Mammary epithelial cell (primary cell): ENCODE measurements at regions of chr1 and their contacts with region 1.

Region 1: DNA sequence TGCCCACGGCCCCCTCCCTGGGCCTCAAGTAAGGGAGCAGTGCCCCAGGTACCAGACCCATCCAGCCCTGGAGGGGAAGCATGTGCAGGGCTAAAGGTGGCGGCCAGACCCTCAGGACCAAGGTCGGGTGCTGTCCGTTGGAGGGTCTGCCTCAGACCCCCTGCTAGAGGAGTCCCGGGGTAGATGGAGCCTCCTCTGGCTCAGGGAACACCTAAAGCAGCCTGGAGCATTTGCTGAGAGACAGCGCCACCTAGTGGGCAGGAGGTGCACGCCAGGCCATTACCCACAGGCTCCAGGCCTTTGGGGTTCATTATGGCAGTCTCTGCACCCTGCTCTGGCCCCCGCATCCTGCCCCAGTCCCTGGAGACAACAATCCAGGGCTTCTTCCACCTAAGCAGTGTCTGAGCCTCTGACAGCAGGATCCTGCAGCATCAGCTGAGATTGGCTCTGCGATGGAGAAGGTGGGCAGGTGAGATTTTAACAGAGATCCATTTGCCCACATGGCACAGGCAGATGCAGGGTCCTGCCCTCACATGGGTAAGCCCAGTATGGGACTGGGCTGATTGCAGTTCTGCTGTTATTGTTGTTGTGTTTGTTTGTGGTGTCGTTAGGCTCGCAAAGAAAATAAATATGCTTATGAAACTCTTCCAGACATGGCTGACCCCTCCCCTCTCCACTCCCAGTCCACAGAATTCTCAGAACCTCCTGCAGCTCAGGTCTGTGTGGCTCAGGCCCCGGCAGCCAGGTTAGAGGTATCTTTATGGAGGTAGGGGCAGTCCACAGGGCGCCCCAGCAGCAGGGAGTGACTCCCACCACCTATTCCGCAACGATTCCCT is 42.4 kb downstream of the CTNNBIP1 start:
- DNase-seq: peak; percentile 61
- H3K4me3 ChIP-seq: no peak overlapping the region
- H3K27ac ChIP-seq: no peak overlapping the region
- H3K4me1 ChIP-seq: peaks cover 14% of the 10 kb centered on the region
- H3K27me3 ChIP-seq: no peaks in the 10 kb centered on the region
- CTCF ChIP-seq: peak; percentile 95 to 98

Region 2: GRCh38 chr1:9724706-9725476 is 142.7 kb before region 1 on chr1:
- CTCF ChIA-PET with region 1: no interaction called
- dilution Hi-C with region 1: no loop called
- in situ Hi-C with region 1: no loop called
- intact Hi-C with region 1: loop called (anchors 1 kb)
- DNase-seq: peak; percentile 45
- H3K4me3 ChIP-seq: no peak overlapping the region
- H3K27ac ChIP-seq: no peak overlapping the region
- H3K4me1 ChIP-seq: peaks cover 27% of the 10 kb centered on the region
- H3K27me3 ChIP-seq: no peaks in the 10 kb centered on the region
- CTCF ChIP-seq: peak; percentile 87 to 91

Region 3: GRCh38 chr1:9784508-9785133 is 83.0 kb before region 1 on chr1:
- CTCF ChIA-PET with region 1: interaction called, 3 read pairs
- dilution Hi-C with region 1: no loop called
- in situ Hi-C with region 1: loop called (anchors 5 kb)
- intact Hi-C with region 1: loop called (anchors 1 kb)
- DNase-seq: peak; percentile 52
- H3K4me3 ChIP-seq: no peak overlapping the region
- H3K27ac ChIP-seq: no peak overlapping the region
- H3K4me1 ChIP-seq: peaks cover 12% of the 10 kb centered on the region
- H3K27me3 ChIP-seq: no peaks in the 10 kb centered on the region
- CTCF ChIP-seq: peak; percentile 79 to 84

Region 4: GRCh38 chr1:9792156-9793042 is 75.2 kb before region 1 on chr1:
- CTCF ChIA-PET with region 1: no interaction called
- dilution Hi-C with region 1: no loop called
- in situ Hi-C with region 1: loop called (anchors 5 kb)
- intact Hi-C with region 1: loop called (anchors 1 kb)
- DNase-seq: no peak
- H3K4me3 ChIP-seq: no peak overlapping the region
- H3K27ac ChIP-seq: no peak overlapping the region
- H3K4me1 ChIP-seq: no peaks in the 10 kb centered on the region
- H3K27me3 ChIP-seq: no peaks in the 10 kb centered on the region
- CTCF ChIP-seq: peak in 1 of 2 donors; percentile 42

Region 5: GRCh38 chr1:9823943-9824701 is 43.5 kb before region 1 on chr1 and contains the start of gene CLSTN1:
- CTCF ChIA-PET with region 1: no interaction called
- dilution Hi-C with region 1: no loop called
- in situ Hi-C with region 1: no loop called
- intact Hi-C with region 1: loop called (anchors 1 kb)
- DNase-seq: peak; percentile 76
- H3K4me3 ChIP-seq: peak within 1 kb of the TSS; percentile 52 to 93 (median 91)
- H3K27ac ChIP-seq: peak within 1 kb of the TSS; percentile 72
- H3K4me1 ChIP-seq: peaks cover 27% of the 10 kb centered on the region
- H3K27me3 ChIP-seq: no peaks in the 10 kb centered on the region
- CTCF ChIP-seq: no peak
- total RNA-seq, gene CLSTN1: 229 to 335 TPM

Region 6: DNA sequence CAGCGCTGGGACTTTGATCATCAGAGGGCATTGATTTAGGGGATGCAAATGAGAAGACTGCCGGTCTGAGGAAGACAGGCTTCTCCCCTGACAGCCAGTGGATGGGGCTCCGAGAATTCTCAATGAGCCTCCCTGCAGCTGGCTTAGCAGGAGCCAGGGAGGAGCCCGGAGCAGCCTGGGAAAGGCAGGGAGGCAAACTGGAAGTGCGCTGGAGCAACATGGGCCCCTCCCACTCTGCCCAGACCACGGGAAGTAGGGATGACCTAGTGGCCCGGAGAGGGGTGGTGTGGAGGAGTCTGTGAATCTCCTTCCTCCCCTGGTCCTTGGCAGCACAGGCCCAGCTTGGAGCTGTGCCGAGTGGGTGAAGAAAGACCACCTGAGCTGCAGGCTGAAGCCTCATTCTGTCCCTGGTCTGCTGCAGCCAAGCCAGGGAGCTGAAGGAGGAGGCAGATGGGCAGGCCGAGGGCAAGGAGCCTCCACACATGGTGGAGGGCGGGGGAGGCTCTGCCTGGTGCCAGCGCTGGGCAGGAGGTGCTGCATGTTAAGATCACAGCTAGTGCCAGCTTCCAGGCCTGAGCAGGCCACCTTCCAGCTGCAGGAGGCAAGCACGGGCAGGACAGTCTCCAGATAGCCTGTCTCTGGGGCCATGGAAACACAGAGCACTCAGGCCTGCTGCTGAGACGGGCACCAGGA is 31.7 kb before region 1 on chr1:
- CTCF ChIA-PET with region 1: no interaction called
- dilution Hi-C with region 1: no loop called
- in situ Hi-C with region 1: no loop called
- intact Hi-C with region 1: loop called (anchors 1 kb)
- DNase-seq: peak; percentile 55
- H3K4me3 ChIP-seq: peak overlapping the region; percentile 3 to 43 (median 25)
- H3K27ac ChIP-seq: peak overlapping the region; percentile 51
- H3K4me1 ChIP-seq: peaks cover 50% of the 10 kb centered on the region
- H3K27me3 ChIP-seq: no peaks in the 10 kb centered on the region
- CTCF ChIP-seq: peak in 1 of 2 donors; percentile 4